Naive thymus-derived CD4-positive, alpha-beta T cell (primary cell): ENCODE measurements at regions of chr2 and their contacts with region 1.

Region 1: DNA sequence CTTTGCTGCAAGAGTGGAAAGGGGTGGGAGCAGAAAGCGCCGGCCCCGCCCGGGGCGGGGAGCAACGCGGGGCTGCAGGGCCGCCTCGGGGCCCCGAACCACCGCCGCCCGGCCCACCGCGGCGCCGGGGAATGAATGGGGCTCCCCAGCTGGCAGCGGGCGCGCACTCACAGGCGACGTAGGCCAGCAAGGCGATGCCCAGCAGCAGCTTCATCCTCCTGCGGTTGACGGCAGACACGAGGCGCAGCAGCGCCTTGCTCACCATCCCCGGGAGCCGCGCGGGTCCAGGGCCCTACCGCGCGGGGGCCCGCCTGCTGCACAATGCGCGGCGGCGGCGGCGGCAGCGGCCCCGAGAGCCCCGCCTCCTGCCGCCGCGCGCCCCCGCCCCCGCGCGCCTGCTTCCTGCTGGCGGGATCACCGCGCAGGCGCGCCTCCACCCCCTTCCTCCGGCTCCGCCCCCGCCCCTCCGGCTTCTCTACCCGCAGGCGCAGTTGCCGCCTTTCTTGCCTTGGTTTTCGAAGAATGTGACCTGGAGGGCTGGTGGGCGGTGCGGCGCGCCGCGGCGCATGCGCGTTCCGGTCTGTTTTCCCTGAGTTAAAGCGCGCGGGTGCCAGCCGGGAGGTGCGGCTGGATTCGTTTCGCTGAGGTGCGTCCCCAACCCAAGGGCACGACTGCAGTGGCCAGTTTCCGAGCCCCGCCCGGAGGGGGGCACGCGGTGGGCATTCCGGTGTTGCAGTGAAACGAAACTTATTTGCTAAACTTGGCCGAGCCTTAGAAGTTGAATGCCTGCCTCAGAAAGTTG is at the start of gene UXS1:
- DNase-seq: peak; percentile 97 to 98 (median 97)
- ATAC-seq: peak; percentile 86
- H3K4me3 ChIP-seq: peak within 1 kb of the TSS; percentile 98
- H3K4me3 Mint-ChIP-seq: peak within 1 kb of the TSS; percentile 84 to 99 (median 94)
- H3K27ac ChIP-seq: peak within 1 kb of the TSS; percentile 85
- H3K27ac Mint-ChIP-seq: peak within 1 kb of the TSS; percentile 71 to 96 (median 94)
- H3K4me1 ChIP-seq: peaks cover 17 to 43% of the 10 kb centered on the region in 2 donors
- H3K4me1 Mint-ChIP-seq: peaks cover 42 to 51% (median 48%) of the 10 kb centered on the region in 7 donors
- H3K27me3 ChIP-seq: no peaks in the 10 kb centered on the region
- H3K27me3 Mint-ChIP-seq: peaks cover 0 to 16% (median 0%) of the 10 kb centered on the region in 5 donors
- total RNA-seq, gene UXS1: 52.3 to 185 (median 93.3) TPM

Region 2: GRCh38 chr2:105037572-105038382 is 1156.4 kb before region 1 on chr2 and contains the start of gene MRPS9:
- CTCF ChIA-PET with region 1: no interaction called
- POLR2A ChIA-PET with region 1: no interaction called
- intact Hi-C with region 1: loop called (anchors 2 to 5 kb)
- DNase-seq: peak; percentile 94 to 97 (median 95)
- ATAC-seq: peak; percentile 99
- H3K4me3 ChIP-seq: peak within 1 kb of the TSS; percentile 65
- H3K4me3 Mint-ChIP-seq: peak within 1 kb of the TSS; percentile 89 to 100 (median 99)
- H3K27ac ChIP-seq: peak within 1 kb of the TSS; percentile 85
- H3K27ac Mint-ChIP-seq: peak within 1 kb of the TSS; percentile 84 to 98 (median 94)
- H3K4me1 ChIP-seq: peaks cover 4 to 12% of the 10 kb centered on the region in 2 donors
- H3K4me1 Mint-ChIP-seq: peaks cover 23 to 66% (median 42%) of the 10 kb centered on the region in 7 donors
- H3K27me3 ChIP-seq: no peaks in the 10 kb centered on the region
- H3K27me3 Mint-ChIP-seq: no peaks in the 10 kb centered on the region
- total RNA-seq, gene MRPS9: 12.5 to 23.6 (median 21.3) TPM

Region 3: GRCh38 chr2:105737980-105738657 is 456.1 kb before region 1 on chr2:
- CTCF ChIA-PET with region 1: no interaction called
- POLR2A ChIA-PET with region 1: no interaction called
- intact Hi-C with region 1: loop called in 1 of 2 experiments (anchors 2 kb)
- DNase-seq: peak in 6 of 9 donors; percentile 56 to 77 (median 70)
- ATAC-seq: peak; percentile 88
- H3K4me3 ChIP-seq: peak overlapping the region; percentile 37
- H3K4me3 Mint-ChIP-seq: peak overlapping the region; percentile 54 to 84 (median 80)
- H3K27ac ChIP-seq: peak overlapping the region; percentile 74
- H3K27ac Mint-ChIP-seq: peak overlapping the region; percentile 90 to 99 (median 96)
- H3K4me1 ChIP-seq: peaks cover 40 to 41% of the 10 kb centered on the region in 2 donors
- H3K4me1 Mint-ChIP-seq: peaks cover 47 to 88% (median 83%) of the 10 kb centered on the region in 7 donors
- H3K27me3 ChIP-seq: no peaks in the 10 kb centered on the region
- H3K27me3 Mint-ChIP-seq: no peaks in the 10 kb centered on the region

Region 4: GRCh38 chr2:105789745-105790460 is 404.3 kb before region 1 on chr2:
- CTCF ChIA-PET with region 1: no interaction called
- POLR2A ChIA-PET with region 1: no interaction called
- intact Hi-C with region 1: loop called in 1 of 2 experiments (anchors 10 kb)
- DNase-seq: peak in 6 of 9 donors; percentile 38 to 78 (median 53)
- ATAC-seq: peak; percentile 79
- H3K4me3 ChIP-seq: peak overlapping the region; percentile 38
- H3K4me3 Mint-ChIP-seq: peak overlapping the region; percentile 52 to 89 (median 72)
- H3K27ac ChIP-seq: peak overlapping the region; percentile 63
- H3K27ac Mint-ChIP-seq: peak overlapping the region; percentile 81 to 99 (median 92)
- H3K4me1 ChIP-seq: peaks cover 86 to 92% of the 10 kb centered on the region in 2 donors
- H3K4me1 Mint-ChIP-seq: peaks cover 62 to 100% (median 94%) of the 10 kb centered on the region in 7 donors
- H3K27me3 ChIP-seq: no peaks in the 10 kb centered on the region
- H3K27me3 Mint-ChIP-seq: no peaks in the 10 kb centered on the region

Region 5: DNA sequence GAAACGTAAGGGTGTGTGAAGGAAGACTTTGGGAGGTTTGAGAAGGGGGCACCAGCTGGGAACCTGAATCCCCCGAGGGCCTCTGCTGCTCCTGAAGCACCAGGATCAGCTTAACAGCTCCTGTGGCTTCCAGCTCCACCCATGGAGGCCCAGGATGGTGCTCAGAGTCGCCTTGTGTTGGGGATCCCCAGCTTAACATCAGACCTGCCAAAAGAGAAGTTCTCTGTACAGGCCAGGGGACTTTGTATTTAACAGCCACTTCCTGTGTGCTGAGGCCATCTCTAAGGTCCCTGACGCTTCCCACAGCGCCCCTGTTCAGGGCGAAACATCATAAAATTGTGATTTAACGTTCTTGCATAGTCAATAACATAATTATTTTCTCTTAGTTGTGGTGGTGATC is 372.0 kb before region 1 on chr2:
- CTCF ChIA-PET with region 1: no interaction called
- POLR2A ChIA-PET with region 1: no interaction called
- intact Hi-C with region 1: no loop called
- DNase-seq: peak in 5 of 9 donors; percentile 18 to 41 (median 28)
- ATAC-seq: peak; percentile 86
- H3K4me3 ChIP-seq: no peak overlapping the region
- H3K4me3 Mint-ChIP-seq: peak overlapping the region; percentile 6 to 73 (median 57)
- H3K27ac ChIP-seq: peak overlapping the region; percentile 63
- H3K27ac Mint-ChIP-seq: peak overlapping the region; percentile 58 to 91 (median 86)
- H3K4me1 ChIP-seq: peaks cover 54 to 59% of the 10 kb centered on the region in 2 donors
- H3K4me1 Mint-ChIP-seq: peaks cover 47 to 87% (median 79%) of the 10 kb centered on the region in 7 donors
- H3K27me3 ChIP-seq: no peaks in the 10 kb centered on the region
- H3K27me3 Mint-ChIP-seq: no peaks in the 10 kb centered on the region

Region 6: DNA sequence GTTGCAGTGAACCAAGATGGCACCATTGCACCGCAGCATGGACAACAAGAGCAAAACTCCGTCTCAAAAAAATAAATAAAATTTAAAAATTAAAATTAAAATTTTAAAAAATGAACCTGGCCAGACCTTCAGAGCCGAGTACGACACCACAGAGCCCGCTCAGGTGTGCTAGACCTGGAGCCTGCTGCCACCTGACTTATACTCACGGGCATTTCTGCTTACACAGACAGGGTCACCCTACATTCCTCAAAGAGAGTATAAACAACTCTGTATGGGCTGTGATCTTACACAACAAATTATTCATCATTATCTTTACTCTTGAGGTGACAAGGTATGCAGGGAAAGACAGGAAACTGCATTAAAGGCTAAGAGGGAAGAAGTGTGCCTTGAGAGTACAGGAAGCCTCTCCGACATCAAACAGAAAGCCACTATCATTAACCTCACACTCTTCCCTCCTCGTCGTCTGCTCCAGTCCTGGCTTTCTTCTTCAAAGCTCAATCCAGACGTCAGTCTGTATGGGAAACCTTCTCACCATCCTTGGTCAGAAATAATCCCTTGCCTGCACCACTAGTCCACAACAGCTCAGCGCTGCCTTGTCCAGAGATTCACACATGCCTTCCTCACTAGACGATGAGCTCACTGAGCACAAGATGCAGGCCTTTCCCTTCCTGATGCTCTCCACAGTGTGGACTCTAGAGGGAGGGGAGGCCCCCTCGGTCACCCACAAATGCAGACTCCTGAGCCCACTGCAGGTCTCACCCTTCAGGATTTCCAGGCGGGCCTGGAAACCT is 56.3 kb before region 1 on chr2:
- CTCF ChIA-PET with region 1: no interaction called
- POLR2A ChIA-PET with region 1: interaction called, 3 read pairs
- intact Hi-C with region 1: loop called (anchors 5 to 10 kb)
- DNase-seq: peak in 7 of 9 donors; percentile 33 to 53 (median 45)
- ATAC-seq: peak; percentile 76
- H3K4me3 ChIP-seq: peak overlapping the region; percentile 46
- H3K4me3 Mint-ChIP-seq: peak overlapping the region; percentile 73 to 90 (median 84)
- H3K27ac ChIP-seq: peak overlapping the region; percentile 70
- H3K27ac Mint-ChIP-seq: peak overlapping the region; percentile 87 to 97 (median 92)
- H3K4me1 ChIP-seq: peaks cover 6 to 34% of the 10 kb centered on the region in 2 donors
- H3K4me1 Mint-ChIP-seq: peaks cover 30 to 53% (median 50%) of the 10 kb centered on the region in 7 donors
- H3K27me3 ChIP-seq: no peaks in the 10 kb centered on the region
- H3K27me3 Mint-ChIP-seq: no peaks in the 10 kb centered on the region

Region 7: GRCh38 chr2:106160786-106161261 is 33.4 kb before region 1 on chr2:
- CTCF ChIA-PET with region 1: interaction called, 9 read pairs
- POLR2A ChIA-PET with region 1: interaction called, 52 read pairs
- intact Hi-C with region 1: loop called (anchors 1 kb)
- DNase-seq: peak in 8 of 9 donors; percentile 33 to 70 (median 62)
- ATAC-seq: peak; percentile 75
- H3K4me3 ChIP-seq: peak overlapping the region; percentile 77
- H3K4me3 Mint-ChIP-seq: peak overlapping the region; percentile 87 to 98 (median 95)
- H3K27ac ChIP-seq: peak overlapping the region; percentile 81
- H3K27ac Mint-ChIP-seq: peak overlapping the region; percentile 95 to 99 (median 98)
- H3K4me1 ChIP-seq: peaks cover 43 to 78% of the 10 kb centered on the region in 2 donors
- H3K4me1 Mint-ChIP-seq: peaks cover 47 to 100% (median 97%) of the 10 kb centered on the region in 7 donors
- H3K27me3 ChIP-seq: no peaks in the 10 kb centered on the region
- H3K27me3 Mint-ChIP-seq: no peaks in the 10 kb centered on the region